Activated CD8-positive, alpha-beta T cell treated with anti-CD3 and anti-CD28 coated beads for 36 hours (primary cell): ENCODE measurements at regions of chr4 and their contacts with region 1.

Region 1: DNA sequence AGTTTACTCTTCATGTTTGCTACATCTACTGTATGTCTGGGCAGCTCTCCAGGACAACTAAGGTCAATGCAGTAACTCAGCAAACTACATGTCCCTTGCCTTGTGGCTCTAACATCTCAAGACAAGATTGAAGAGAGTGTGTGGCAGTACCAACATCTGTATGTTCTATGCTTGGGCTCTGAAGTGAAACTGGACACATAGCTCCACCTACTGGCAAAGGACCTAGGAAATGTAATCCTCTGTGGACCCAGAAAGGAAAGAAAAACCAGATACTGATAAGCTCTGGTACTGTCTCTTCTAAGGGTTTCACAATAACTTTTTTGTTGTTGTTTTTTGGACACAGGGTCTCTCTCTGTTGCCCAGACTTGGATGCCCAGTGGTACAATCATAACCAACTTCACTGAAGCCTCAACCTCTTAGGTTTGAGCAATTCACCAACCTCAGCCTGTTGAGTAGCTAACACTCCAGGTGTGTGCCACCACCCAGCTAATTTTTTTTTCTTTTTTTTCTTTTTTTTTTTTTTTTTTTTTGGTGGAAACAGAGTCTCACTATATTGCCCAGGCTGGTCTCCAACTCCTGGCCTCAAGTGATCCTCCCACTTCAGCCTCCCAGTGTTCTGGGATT is 64.1 kb downstream of the QDPR start:
- DNase-seq: peak; percentile 72
- ATAC-seq: peak; percentile 90
- H3K4me3 Mint-ChIP-seq: no peak overlapping the region
- H3K27ac Mint-ChIP-seq: no peak overlapping the region
- H3K4me1 Mint-ChIP-seq: no peaks in the 10 kb centered on the region
- H3K27me3 Mint-ChIP-seq: peaks cover 2% of the 10 kb centered on the region
- CTCF ChIP-seq: peak; percentile 59

Region 2: GRCh38 chr4:16916719-16917337 is 531.0 kb before region 1 on chr4:
- CTCF ChIA-PET with region 1: interaction called, 13 read pairs
- POLR2A ChIA-PET with region 1: interaction called, 3 read pairs
- intact Hi-C with region 1: no loop called
- DNase-seq: peak; percentile 90
- ATAC-seq: peak; percentile 98
- H3K4me3 Mint-ChIP-seq: no peak overlapping the region
- H3K27ac Mint-ChIP-seq: no peak overlapping the region
- H3K4me1 Mint-ChIP-seq: peaks cover 3% of the 10 kb centered on the region
- H3K27me3 Mint-ChIP-seq: no peaks in the 10 kb centered on the region
- CTCF ChIP-seq: peak; percentile 97

Region 3: DNA sequence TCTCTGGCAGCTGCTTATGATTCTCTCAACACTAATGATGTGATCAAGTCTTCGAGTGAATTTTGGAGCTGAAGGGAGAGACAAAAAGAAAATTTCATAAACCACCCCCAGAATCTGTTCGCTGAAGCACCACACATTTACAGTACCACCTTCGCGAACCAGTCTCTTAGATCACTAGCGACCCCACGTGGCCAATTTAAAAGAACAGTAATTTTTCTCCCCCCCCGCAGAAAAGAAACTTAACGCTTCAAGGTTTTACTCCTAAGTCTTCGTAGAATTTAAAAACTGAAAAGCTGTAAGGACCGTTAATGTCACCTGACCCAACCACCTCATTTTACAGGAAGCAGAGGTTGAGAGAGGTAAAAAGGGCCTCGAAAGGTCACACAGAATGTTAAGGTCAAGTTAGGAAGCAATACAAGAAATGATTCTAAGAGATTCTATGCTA is 123.4 kb before region 1 on chr4:
- CTCF ChIA-PET with region 1: interaction called, 23 read pairs
- POLR2A ChIA-PET with region 1: no interaction called
- intact Hi-C with region 1: no loop called
- DNase-seq: peak; percentile 74
- ATAC-seq: peak; percentile 89
- H3K4me3 Mint-ChIP-seq: peak overlapping the region; percentile 18
- H3K27ac Mint-ChIP-seq: peak overlapping the region; percentile 73
- H3K4me1 Mint-ChIP-seq: peaks cover 15% of the 10 kb centered on the region
- H3K27me3 Mint-ChIP-seq: no peaks in the 10 kb centered on the region
- CTCF ChIP-seq: peak; percentile 59

Region 4: GRCh38 chr4:17336524-17336961 is 111.2 kb before region 1 on chr4:
- CTCF ChIA-PET with region 1: interaction called, 10 read pairs
- POLR2A ChIA-PET with region 1: no interaction called
- intact Hi-C with region 1: no loop called
- DNase-seq: peak; percentile 88
- ATAC-seq: peak; percentile 93
- H3K4me3 Mint-ChIP-seq: peak overlapping the region; percentile 41
- H3K27ac Mint-ChIP-seq: peak overlapping the region; percentile 94
- H3K4me1 Mint-ChIP-seq: peaks cover 43% of the 10 kb centered on the region
- H3K27me3 Mint-ChIP-seq: no peaks in the 10 kb centered on the region
- CTCF ChIP-seq: no peak

Region 5: DNA sequence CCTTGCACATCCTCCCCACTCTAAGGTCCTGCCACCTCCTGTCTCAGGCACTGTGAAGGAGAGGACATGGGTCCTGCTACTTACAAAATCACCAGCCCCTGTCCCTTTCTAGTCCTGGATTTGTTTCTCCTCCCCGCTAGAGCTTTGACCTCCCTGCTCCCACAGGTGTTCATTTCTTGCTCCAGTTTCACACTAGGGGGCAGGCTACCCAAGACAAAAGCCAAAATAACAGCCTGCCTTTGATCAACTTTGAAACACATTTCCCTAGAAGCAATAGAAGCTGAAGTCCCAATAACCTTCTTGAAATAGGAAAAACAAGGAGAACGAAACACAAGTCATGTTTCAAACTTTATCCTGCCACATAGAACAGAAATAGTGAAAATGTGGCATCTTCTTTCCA is 100.3 kb before region 1 on chr4:
- CTCF ChIA-PET with region 1: interaction called, 43 read pairs
- POLR2A ChIA-PET with region 1: no interaction called
- intact Hi-C with region 1: loop called (anchors 5 kb)
- DNase-seq: peak; percentile 58
- ATAC-seq: peak; percentile 61
- H3K4me3 Mint-ChIP-seq: no peak overlapping the region
- H3K27ac Mint-ChIP-seq: no peak overlapping the region
- H3K4me1 Mint-ChIP-seq: no peaks in the 10 kb centered on the region
- H3K27me3 Mint-ChIP-seq: no peaks in the 10 kb centered on the region
- CTCF ChIP-seq: peak; percentile 49

Region 6: DNA sequence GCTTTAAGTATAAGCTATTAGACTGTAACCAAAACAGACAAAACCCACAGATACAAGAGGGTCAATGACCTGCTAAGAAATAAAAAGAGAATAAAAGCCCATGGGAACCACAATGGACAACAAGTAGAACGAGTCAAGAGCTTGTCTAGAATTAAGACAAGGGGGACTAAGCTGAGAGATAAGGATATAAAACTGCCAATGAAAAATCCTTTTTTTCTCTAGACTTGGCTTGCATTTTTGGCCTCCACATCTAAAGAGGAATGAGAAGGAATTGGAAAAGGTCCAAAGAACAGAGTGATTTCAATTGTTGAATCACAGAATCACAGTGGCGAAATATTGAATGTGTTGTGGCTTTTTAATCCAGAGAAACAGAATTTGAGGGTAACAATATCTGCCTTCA is 71.6 kb before region 1 on chr4:
- CTCF ChIA-PET with region 1: interaction called, 12 read pairs
- POLR2A ChIA-PET with region 1: no interaction called
- intact Hi-C with region 1: no loop called
- DNase-seq: no peak
- ATAC-seq: no peak
- H3K4me3 Mint-ChIP-seq: no peak overlapping the region
- H3K27ac Mint-ChIP-seq: no peak overlapping the region
- H3K4me1 Mint-ChIP-seq: peaks cover 2% of the 10 kb centered on the region
- H3K27me3 Mint-ChIP-seq: peaks cover 3% of the 10 kb centered on the region
- CTCF ChIP-seq: no peak

Region 7: GRCh38 chr4:17468371-17469221 is 20.8 kb after region 1 on chr4:
- CTCF ChIA-PET with region 1: interaction called, 16 read pairs
- POLR2A ChIA-PET with region 1: no interaction called
- intact Hi-C with region 1: no loop called
- DNase-seq: no peak
- ATAC-seq: no peak
- H3K4me3 Mint-ChIP-seq: no peak overlapping the region
- H3K27ac Mint-ChIP-seq: no peak overlapping the region
- H3K4me1 Mint-ChIP-seq: peaks cover 2% of the 10 kb centered on the region
- H3K27me3 Mint-ChIP-seq: no peaks in the 10 kb centered on the region
- CTCF ChIP-seq: no peak

Region 8: DNA sequence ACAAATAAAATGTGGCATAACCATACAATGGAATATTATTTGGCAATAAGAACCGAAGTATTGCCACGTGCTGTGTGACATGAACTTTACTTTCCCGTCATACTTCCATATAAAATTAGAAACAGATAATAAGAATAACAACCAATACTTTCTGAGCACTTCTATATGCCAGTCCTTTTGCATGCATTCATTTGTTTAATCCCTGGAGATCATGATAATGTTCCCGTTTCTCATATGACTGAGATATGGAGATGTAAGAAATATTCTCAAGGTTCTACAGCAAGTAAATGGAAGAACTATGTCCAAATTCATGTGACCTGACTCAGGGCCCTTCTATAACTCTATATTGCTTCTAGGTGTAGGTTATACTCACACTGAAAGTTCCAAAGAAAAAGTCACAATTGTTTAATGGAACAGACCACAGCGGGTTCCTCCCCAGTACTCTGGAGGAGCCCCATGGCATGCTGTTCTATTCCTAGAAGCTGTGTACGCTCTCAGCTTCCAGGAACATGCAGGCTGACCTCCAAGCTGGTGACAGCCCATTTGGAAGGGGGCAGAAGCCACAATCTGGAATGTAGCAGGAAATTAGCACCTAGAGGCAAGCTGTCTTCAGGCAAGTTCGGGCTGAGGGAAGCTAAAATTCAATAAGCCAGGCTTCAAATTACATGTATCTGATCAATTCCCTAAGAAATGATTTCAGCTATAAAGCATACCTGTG is 32.6 kb after region 1 on chr4:
- CTCF ChIA-PET with region 1: no interaction called
- POLR2A ChIA-PET with region 1: no interaction called
- intact Hi-C with region 1: no loop called
- DNase-seq: no peak
- ATAC-seq: no peak
- H3K4me3 Mint-ChIP-seq: no peak overlapping the region
- H3K27ac Mint-ChIP-seq: no peak overlapping the region
- H3K4me1 Mint-ChIP-seq: no peaks in the 10 kb centered on the region
- H3K27me3 Mint-ChIP-seq: no peaks in the 10 kb centered on the region
- CTCF ChIP-seq: no peak